ENCODE measurements at regions of chr2 and their contacts with region 1.

Region 1: DNA sequence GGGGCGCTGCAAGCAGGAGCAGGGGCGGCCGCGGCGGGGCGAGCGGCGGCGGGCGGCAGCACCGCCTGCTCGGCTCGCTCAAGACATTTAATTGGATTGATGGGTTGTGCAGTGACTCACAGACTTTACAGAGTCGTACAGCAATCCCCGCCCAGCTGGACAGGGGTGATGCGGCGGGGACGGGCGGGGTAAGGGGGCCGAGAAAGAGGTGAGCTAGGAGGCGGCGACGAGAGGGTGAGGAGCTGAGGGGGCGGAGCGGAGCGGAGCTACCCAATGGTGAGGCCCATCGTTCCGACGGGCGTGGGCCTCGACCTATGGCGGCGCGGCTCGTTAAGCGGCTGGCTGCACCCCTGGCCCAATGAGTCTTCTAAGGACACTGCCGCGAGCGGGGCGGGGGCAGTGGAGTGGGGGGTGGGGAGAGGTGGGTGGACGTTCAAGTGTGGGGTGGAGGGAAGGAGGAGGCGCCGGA is 97.1 kb upstream of the SERTAD2 start:
- DNase-seq: peak; percentile 92 to 99 (median 97)
- ATAC-seq: peak; percentile 85 to 87 (median 86)
- H3K4me3 ChIP-seq: peak overlapping the region; percentile 89 to 95
- H3K4me3 Mint-ChIP-seq: peak overlapping the region; percentile 87 to 97 (median 97)
- H3K27ac ChIP-seq: peak overlapping the region; percentile 95
- H3K27ac Mint-ChIP-seq: peak overlapping the region; percentile 93
- H3K4me1 ChIP-seq: peaks cover 10% of the 10 kb centered on the region in 2 experiments
- H3K4me1 Mint-ChIP-seq: peaks cover 27 to 29% (median 27%) of the 10 kb centered on the region in 3 donors
- H3K27me3 ChIP-seq: no peaks in the 10 kb centered on the region
- H3K27me3 Mint-ChIP-seq: no peaks in the 10 kb centered on the region

Region 2: GRCh38 chr2:64644177-64645004 is 106.5 kb before region 1 on chr2:
- CTCF ChIA-PET with region 1: interaction called, 4 to 78 read pairs
- POLR2A ChIA-PET with region 1: interaction called in 1 of 2 experiments, 6 read pairs
- DNase-seq: peak in 34 of 35 experiments; percentile 24 to 72 (median 44)
- ATAC-seq: peak; percentile 79 to 82 (median 80)
- H3K4me3 ChIP-seq: peak overlapping the region; percentile 27 to 60
- H3K4me3 Mint-ChIP-seq: peak overlapping the region; percentile 81 to 82 (median 82)
- H3K27ac ChIP-seq: peak overlapping the region; percentile 56
- H3K27ac Mint-ChIP-seq: peak overlapping the region; percentile 87 to 89
- H3K4me1 ChIP-seq: peaks cover 46 to 53% of the 10 kb centered on the region in 2 experiments
- H3K4me1 Mint-ChIP-seq: peaks cover 86 to 95% (median 90%) of the 10 kb centered on the region in 3 donors
- H3K27me3 ChIP-seq: no peaks in the 10 kb centered on the region
- H3K27me3 Mint-ChIP-seq: no peaks in the 10 kb centered on the region

Region 3: DNA sequence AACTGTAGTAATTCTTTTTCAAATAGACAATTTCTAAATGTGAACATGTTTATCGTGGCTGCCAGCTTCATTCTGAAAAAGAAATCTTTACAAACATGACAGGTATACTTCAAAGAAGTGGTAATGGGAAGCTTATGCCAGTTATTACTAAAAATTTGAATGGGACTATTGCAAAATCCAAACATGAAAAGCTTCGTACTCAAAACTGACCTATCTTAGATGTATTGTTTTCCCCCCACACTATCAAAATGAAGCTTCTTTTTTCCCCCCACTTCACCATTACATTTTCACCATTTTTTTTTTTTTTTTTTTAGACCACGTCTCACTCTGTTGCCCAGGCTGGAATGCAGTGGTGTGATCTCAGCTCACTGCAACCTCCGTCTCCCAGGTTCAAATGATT is 46.7 kb before region 1 on chr2:
- CTCF ChIA-PET with region 1: no interaction called
- POLR2A ChIA-PET with region 1: interaction called in 1 of 2 experiments, 10 read pairs
- DNase-seq: no peak
- ATAC-seq: no peak
- H3K4me3 ChIP-seq: no peak overlapping the region
- H3K4me3 Mint-ChIP-seq: no peak overlapping the region
- H3K27ac ChIP-seq: no peak overlapping the region
- H3K27ac Mint-ChIP-seq: no peak overlapping the region
- H3K4me1 ChIP-seq: peaks cover 0 to 5% of the 10 kb centered on the region in 2 experiments
- H3K4me1 Mint-ChIP-seq: peaks cover 10 to 16% (median 16%) of the 10 kb centered on the region in 3 donors
- H3K27me3 ChIP-seq: no peaks in the 10 kb centered on the region
- H3K27me3 Mint-ChIP-seq: no peaks in the 10 kb centered on the region

Region 4: GRCh38 chr2:64767670-64768468 is 17.0 kb after region 1 on chr2:
- CTCF ChIA-PET with region 1: interaction called, 4 to 18 read pairs
- POLR2A ChIA-PET with region 1: interaction called in 1 of 2 experiments, 23 read pairs
- DNase-seq: peak; percentile 41 to 84 (median 60)
- ATAC-seq: peak; percentile 75 to 80 (median 78)
- H3K4me3 ChIP-seq: peak overlapping the region; percentile 59 to 71
- H3K4me3 Mint-ChIP-seq: peak overlapping the region; percentile 89 to 96 (median 94)
- H3K27ac ChIP-seq: peak overlapping the region; percentile 92
- H3K27ac Mint-ChIP-seq: peak overlapping the region; percentile 84 to 98
- H3K4me1 ChIP-seq: peaks cover 7 to 8% of the 10 kb centered on the region in 2 experiments
- H3K4me1 Mint-ChIP-seq: peaks cover 21 to 22% (median 21%) of the 10 kb centered on the region in 3 donors
- H3K27me3 ChIP-seq: no peaks in the 10 kb centered on the region
- H3K27me3 Mint-ChIP-seq: no peaks in the 10 kb centered on the region

Region 5: GRCh38 chr2:64904413-64905329 is 153.8 kb after region 1 on chr2:
- CTCF ChIA-PET with region 1: no interaction called
- POLR2A ChIA-PET with region 1: no interaction called
- DNase-seq: no peak
- ATAC-seq: no peak
- H3K4me3 ChIP-seq: peak overlapping the region in 1 of 2 donors; percentile 40
- H3K4me3 Mint-ChIP-seq: peak overlapping the region in 1 of 3 donors; percentile 57
- H3K27ac ChIP-seq: no peak overlapping the region
- H3K27ac Mint-ChIP-seq: no peak overlapping the region
- H3K4me1 ChIP-seq: peaks cover 0 to 2% of the 10 kb centered on the region in 2 experiments
- H3K4me1 Mint-ChIP-seq: peaks cover 0 to 6% (median 0%) of the 10 kb centered on the region in 3 donors
- H3K27me3 ChIP-seq: peaks cover 0 to 21% of the 10 kb centered on the region in 2 experiments
- H3K27me3 Mint-ChIP-seq: peaks cover 0 to 14% of the 10 kb centered on the region in 2 donors

Region 6: GRCh38 chr2:65214843-65215242 is 464.0 kb after region 1 on chr2:
- CTCF ChIA-PET with region 1: no interaction called
- POLR2A ChIA-PET with region 1: interaction called in 1 of 2 experiments, 11 read pairs
- DNase-seq: no peak
- ATAC-seq: no peak
- H3K4me3 ChIP-seq: no peak overlapping the region
- H3K4me3 Mint-ChIP-seq: no peak overlapping the region
- H3K27ac ChIP-seq: no peak overlapping the region
- H3K27ac Mint-ChIP-seq: no peak overlapping the region
- H3K4me1 ChIP-seq: no peaks in the 10 kb centered on the region
- H3K4me1 Mint-ChIP-seq: no peaks in the 10 kb centered on the region
- H3K27me3 ChIP-seq: no peaks in the 10 kb centered on the region
- H3K27me3 Mint-ChIP-seq: no peaks in the 10 kb centered on the region

Measured in T-cell (primary cell).